ENCODE measurements at regions of chr17 and their contacts with region 1.

Region 1: DNA sequence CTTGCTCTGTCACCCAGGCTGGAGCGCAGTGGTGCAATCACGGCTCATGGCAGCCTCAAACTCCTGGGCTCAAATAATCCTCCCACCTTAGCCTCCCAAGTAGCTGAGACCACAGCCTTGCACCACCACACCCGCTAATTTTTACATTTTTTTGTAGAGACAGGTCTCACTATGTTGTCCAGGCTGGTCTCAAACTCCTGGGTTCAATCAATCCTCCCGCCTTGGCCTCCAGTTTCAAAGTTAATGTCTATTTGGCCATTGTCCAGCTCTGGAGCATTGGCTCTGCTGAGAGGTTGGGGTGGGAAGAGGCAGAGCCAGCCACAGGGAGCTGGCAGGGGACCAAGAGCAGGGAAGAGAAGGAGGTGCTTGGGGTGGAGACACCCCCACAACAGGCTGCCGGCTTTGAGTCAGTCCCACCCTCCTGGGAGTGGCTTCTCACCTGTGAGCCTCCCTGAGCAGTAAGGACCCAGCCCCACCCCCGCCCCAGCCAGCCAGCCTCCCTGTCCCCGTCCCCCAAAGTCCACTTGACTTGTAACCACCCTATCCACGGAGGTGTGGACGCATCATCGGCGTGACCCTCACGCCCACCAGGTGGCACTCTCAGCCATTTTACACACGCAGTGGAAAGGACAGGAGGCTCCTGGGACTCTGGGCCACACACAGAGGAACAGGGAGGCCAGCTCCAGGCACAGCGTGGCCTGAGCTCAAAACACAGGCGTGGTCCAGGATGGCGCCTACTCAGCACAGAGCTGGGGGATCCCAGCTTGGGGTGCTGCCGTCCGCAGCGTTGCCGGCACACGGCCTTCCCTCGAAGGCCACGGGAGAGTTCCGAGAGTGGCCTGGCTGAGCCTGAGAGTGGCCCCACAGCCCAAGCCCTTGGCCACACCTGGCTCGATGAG is 22.8 kb upstream of the PVALEF start:
- DNase-seq: peak; percentile 79
- H3K4me3 Mint-ChIP-seq: no peak overlapping the region
- H3K27ac Mint-ChIP-seq: no peak overlapping the region
- H3K4me1 Mint-ChIP-seq: no peaks in the 10 kb centered on the region
- H3K27me3 Mint-ChIP-seq: no peaks in the 10 kb centered on the region
- CTCF ChIP-seq: peak; percentile 56

Region 2: DNA sequence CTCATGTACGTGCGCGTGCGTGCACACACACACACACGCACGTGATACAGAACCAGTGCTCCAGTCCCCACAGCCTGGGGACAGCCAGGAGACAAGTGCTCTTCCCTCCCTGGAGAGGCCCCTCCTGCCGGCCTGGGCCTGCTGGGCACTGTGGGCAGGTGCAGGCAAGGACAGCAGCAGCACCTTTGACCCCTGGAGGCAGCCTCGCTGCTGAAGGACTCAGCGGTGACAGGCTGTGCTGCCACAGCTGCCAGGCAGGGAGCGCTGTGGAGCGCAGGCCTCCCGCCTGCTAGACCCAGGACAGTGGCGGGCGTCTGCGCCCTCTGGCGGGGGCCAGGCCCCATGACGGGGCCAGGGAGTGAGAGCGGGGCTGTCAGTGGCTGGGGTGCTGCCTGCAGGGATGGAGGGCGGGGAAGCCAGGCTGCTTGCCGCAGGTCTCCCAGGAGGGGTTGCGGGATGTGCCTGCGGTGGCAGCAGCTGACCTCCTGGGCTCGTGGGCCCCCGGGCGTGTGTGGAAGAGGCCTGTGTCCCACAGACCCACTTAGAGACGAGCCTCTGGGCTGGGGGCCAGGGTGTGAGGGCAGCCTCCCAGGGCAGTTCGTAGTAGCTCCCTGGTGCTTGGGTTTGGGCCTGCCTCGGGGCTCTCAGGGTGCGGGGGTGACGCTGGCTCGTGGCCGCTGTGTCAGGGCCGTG is 40.8 kb before region 1 on chr17:
- CTCF ChIA-PET with region 1: no interaction called
- POLR2A ChIA-PET with region 1: no interaction called
- intact Hi-C with region 1: no loop called
- DNase-seq: peak; percentile 73
- H3K4me3 Mint-ChIP-seq: no peak overlapping the region
- H3K27ac Mint-ChIP-seq: no peak overlapping the region
- H3K4me1 Mint-ChIP-seq: peaks cover 10% of the 10 kb centered on the region
- H3K27me3 Mint-ChIP-seq: no peaks in the 10 kb centered on the region
- CTCF ChIP-seq: peak; percentile 100

Region 3: DNA sequence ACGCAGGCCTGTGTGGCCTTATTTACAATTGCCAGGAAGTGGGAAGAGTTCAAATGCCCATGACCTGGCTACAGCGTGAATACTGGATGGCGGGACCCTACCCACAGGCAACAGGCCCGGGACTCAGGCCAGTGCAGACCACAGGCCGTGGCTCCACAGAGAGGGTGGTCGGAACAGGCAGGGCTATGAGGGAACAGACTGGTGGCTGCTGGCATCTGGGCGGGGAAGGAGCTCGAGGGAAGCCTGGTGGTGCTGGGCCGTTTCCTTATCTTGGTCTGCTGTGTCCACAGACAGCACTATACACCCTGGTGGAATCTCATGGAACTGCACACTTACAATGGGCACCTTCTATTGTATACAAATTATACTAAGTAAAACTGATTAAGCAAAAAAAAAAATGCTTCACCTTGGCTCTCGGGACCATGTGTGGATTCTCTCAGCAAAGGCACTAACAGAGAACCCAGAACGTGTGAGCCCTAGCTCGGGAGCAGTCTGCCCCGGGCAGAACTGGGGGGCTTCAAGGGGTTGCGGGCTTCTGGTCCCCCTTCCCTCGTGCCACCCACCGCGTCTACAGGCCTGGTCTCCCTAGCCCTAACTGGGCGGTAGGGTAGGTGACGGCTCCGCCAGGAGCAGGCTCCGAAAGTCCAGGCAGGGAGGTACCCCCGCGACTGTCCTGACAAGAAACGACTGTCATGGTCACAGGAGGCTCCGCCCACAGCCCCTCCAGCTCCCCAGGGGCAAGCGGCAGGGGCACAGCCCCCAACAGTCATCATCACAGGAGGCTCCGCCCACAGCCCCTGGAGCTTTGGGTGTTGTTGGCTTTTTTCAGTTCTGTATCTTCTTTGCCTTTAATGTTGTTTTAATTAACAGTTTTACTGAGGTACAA is 58.4 kb after region 1 on chr17:
- CTCF ChIA-PET with region 1: interaction called, 7 read pairs
- POLR2A ChIA-PET with region 1: no interaction called
- intact Hi-C with region 1: loop called (anchors 2 kb)
- DNase-seq: peak; percentile 63
- H3K4me3 Mint-ChIP-seq: no peak overlapping the region
- H3K27ac Mint-ChIP-seq: no peak overlapping the region
- H3K4me1 Mint-ChIP-seq: no peaks in the 10 kb centered on the region
- H3K27me3 Mint-ChIP-seq: no peaks in the 10 kb centered on the region
- CTCF ChIP-seq: peak; percentile 54

Region 4: GRCh38 chr17:81238817-81239600 is 96.5 kb after region 1 on chr17 and contains the starts of genes NDUFAF8 and TEPSIN:
- CTCF ChIA-PET with region 1: interaction called, 4 read pairs
- POLR2A ChIA-PET with region 1: interaction called, 4 read pairs
- intact Hi-C with region 1: loop called (anchors 2 kb)
- DNase-seq: peak; percentile 100
- H3K4me3 Mint-ChIP-seq: peak within 1 kb of the TSS; percentile 84
- H3K27ac Mint-ChIP-seq: peak within 1 kb of the TSS; percentile 87
- H3K4me1 Mint-ChIP-seq: peaks cover 24% of the 10 kb centered on the region
- H3K27me3 Mint-ChIP-seq: no peaks in the 10 kb centered on the region
- CTCF ChIP-seq: no peak
- total RNA-seq, gene NDUFAF8: 95.0 and 95.3 TPM in 2 replicates
- total RNA-seq, gene TEPSIN: 23.4 and 27.4 TPM in 2 replicates

Region 5: DNA sequence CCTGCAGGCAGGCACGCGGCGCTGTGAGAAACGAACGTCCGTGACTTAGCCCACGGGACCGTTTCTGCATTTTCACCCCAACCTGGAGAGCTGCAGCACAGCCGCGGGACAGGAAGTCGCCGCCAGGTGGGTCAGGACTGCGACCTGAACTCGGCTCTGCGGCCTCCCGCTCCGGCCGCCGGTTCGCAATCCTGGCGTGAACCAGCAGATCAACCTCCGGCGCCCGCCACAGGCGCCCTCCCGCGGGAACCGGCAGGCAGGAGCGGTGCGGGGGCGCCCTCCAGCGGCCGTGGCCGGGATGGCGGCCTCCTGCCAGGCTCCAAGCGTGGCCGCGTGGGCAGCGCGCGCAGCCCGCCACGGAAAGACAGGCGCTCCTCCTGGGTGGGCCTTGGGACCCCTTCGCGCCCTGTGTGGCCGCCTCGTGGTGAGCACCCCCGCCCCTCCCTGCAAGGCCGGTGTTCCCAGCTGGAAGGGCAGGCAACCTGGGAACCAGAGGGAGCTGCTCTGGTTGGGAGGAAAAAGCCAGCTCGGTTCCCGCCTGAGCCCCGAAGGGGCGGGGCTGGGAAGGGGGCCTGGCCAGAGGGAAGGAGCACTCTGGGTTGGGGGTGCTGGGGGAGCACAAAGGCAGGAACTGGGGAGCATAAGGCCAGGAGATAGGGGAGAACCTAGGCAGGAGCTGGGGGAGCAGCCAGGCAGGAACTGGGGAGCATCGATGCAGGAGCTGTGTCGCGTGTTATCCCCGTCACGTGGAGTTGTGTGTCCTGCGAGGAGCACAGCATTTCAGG is 341.8 kb after region 1 on chr17:
- CTCF ChIA-PET with region 1: interaction called, 5 read pairs
- POLR2A ChIA-PET with region 1: interaction called, 4 read pairs
- intact Hi-C with region 1: loop called (anchors 2 kb)
- DNase-seq: peak; percentile 70
- H3K4me3 Mint-ChIP-seq: no peak overlapping the region
- H3K27ac Mint-ChIP-seq: no peak overlapping the region
- H3K4me1 Mint-ChIP-seq: no peaks in the 10 kb centered on the region
- H3K27me3 Mint-ChIP-seq: no peaks in the 10 kb centered on the region
- CTCF ChIP-seq: peak; percentile 98